Psoas muscle (tissue), 8 donors: ENCODE measurements at regions of chr14 and their contacts with region 1.

Region 1: DNA sequence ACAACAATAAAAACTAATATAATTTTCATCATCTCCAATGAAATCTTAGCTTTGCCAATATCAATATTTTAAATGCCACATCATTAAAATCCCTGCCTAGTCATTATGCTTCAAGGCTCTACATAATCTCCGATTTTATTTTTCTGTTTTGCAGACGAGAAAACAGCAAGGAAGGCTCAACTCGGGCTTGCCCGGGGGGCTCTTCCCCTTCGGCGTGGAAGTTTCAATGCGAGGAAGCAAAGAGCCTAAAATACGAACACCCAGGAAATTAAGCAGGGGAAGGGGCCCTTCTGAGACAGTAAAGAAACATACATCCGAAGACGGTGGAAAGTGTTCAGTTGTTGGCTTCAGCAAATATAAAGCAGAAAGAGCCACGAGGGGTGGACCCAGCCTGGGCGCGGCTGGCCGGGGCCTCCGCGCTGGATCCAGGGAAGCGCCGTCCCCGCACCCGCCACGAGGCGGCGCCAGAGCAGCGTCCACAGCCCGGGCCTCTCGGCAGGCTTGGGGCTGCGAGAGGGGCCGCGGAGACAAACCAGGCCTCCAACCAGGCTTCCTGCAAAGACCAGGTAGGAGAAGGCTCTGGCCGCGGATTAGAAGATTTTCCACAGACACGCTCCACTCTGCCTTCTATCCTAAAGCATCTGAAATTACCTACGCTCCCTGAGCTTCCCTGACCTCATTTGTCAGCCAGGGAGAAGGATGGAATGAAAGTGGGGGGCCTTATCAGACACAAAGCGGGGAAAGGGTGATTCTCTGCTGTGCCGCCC is 77.2 kb downstream of the SERPINA3 start:
- DNase-seq: peak; percentile 68 to 79
- ATAC-seq: peak; percentile 76 to 92 (median 89)
- H3K4me3 ChIP-seq: no peak overlapping the region
- H3K27ac ChIP-seq: no peak overlapping the region
- H3K4me1 ChIP-seq: no peaks in the 10 kb centered on the region
- H3K27me3 ChIP-seq: no peaks in the 10 kb centered on the region
- CTCF ChIP-seq: peak; percentile 85

Region 2: DNA sequence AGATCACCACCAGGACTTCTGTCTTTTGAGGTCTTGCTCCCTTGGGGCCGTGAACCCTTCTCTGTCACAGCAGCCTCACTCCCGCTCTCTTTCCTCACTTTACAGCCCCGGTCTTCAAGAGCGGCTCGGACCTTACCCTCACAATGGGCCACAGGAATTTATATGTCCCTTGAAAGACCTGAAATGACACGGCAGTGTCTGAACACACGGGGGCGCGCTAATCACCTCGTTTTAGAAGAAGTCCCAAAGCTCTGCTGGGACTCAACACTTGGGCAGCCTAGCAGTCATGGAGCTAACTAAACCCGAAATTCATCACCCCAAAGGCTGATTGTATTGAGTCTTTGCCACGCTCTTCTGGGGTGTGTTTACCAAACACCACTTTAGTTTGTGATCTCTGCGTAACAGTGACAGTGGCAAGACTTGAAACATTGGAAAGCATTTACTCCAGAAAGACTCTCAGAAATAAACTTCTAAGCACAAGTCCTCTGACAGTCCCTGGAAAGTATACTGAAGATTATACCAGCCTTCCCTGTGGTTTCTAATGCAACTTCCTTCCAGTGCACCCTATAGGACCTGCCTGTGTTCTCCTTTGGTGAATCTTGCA is 265.8 kb before region 1 on chr14:
- intact Hi-C with region 1: loop called in 1 of 2 experiments (anchors 10 kb)
- DNase-seq: peak; percentile 57 to 76
- ATAC-seq: peak in 2 of 4 donors; percentile 25 to 50
- H3K4me3 ChIP-seq: no peak overlapping the region
- H3K27ac ChIP-seq: no peak overlapping the region
- H3K4me1 ChIP-seq: no peaks in the 10 kb centered on the region
- H3K27me3 ChIP-seq: peaks cover 0 to 7% (median 2%) of the 10 kb centered on the region in 3 donors
- CTCF ChIP-seq: peak; percentile 28

Region 3: GRCh38 chr14:94773071-94773648 is 83.8 kb after region 1 on chr14:
- intact Hi-C with region 1: no loop called
- DNase-seq: no peak
- ATAC-seq: no peak
- H3K4me3 ChIP-seq: no peak overlapping the region
- H3K27ac ChIP-seq: no peak overlapping the region
- H3K4me1 ChIP-seq: peaks cover 6% of the 10 kb centered on the region
- H3K27me3 ChIP-seq: peaks cover 2 to 94% (median 37%) of the 10 kb centered on the region in 3 donors
- CTCF ChIP-seq: no peak

Region 4: DNA sequence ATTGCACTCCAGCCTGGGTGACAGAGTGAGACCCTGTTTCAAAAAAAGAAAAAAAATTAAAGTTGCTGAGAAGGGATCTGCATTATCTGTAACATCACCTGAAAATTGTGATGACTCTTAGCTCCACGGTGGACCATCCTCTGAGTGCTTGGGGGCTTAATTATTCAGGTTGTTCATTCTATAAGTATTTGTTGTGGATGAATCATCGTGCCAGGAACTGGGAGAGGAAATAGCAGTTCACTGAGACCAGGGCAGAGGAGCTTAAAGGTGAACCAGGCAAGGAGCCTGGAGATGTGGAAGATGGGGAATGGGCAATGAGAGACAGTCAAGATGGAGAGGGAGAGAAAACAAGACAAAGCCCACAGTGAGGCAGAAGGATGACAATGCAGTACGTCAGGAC is 106.0 kb after region 1 on chr14:
- intact Hi-C with region 1: no loop called
- DNase-seq: no peak
- ATAC-seq: no peak
- H3K4me3 ChIP-seq: no peak overlapping the region
- H3K27ac ChIP-seq: no peak overlapping the region
- H3K4me1 ChIP-seq: no peaks in the 10 kb centered on the region
- H3K27me3 ChIP-seq: peaks cover 0 to 3% (median 2%) of the 10 kb centered on the region in 3 donors
- CTCF ChIP-seq: no peak

Region 5: GRCh38 chr14:94960285-94960996 is 271.0 kb after region 1 on chr14:
- intact Hi-C with region 1: no loop called
- DNase-seq: no peak
- ATAC-seq: no peak
- H3K4me3 ChIP-seq: no peak overlapping the region
- H3K27ac ChIP-seq: no peak overlapping the region
- H3K4me1 ChIP-seq: no peaks in the 10 kb centered on the region
- H3K27me3 ChIP-seq: peaks cover 0 to 4% (median 2%) of the 10 kb centered on the region in 3 donors
- CTCF ChIP-seq: no peak

Region 6: GRCh38 chr14:95098984-95099599 is 409.7 kb after region 1 on chr14:
- intact Hi-C with region 1: loop called in 1 of 2 experiments (anchors 5 kb)
- DNase-seq: peak; percentile 72 to 77
- ATAC-seq: peak; percentile 72 to 84 (median 80)
- H3K4me3 ChIP-seq: no peak overlapping the region
- H3K27ac ChIP-seq: no peak overlapping the region
- H3K4me1 ChIP-seq: peaks cover 13% of the 10 kb centered on the region
- H3K27me3 ChIP-seq: no peaks in the 10 kb centered on the region
- CTCF ChIP-seq: peak; percentile 71

Region 7: DNA sequence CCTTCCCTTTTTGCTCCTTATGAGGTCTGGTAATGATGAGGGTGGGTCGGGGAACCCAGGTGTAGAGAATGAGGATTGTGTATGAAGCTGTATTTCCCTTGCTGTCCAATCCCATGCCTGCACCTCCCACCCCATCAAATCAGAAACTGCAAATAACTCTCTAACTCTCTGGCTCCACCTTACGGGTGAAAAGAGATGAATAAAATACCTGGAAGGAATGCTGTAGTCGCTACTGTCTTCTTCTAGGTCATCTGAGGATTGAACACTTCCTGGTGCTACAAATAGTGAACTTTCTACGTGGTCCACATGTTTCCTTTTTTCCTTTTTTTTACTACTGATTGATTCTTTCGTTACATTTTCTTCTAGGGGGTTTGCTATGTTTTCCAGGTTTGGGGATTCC is 506.9 kb after region 1 on chr14:
- intact Hi-C with region 1: loop called in 1 of 2 experiments (anchors 5 kb)
- DNase-seq: no peak
- ATAC-seq: no peak
- H3K4me3 ChIP-seq: no peak overlapping the region
- H3K27ac ChIP-seq: no peak overlapping the region
- H3K4me1 ChIP-seq: no peaks in the 10 kb centered on the region
- H3K27me3 ChIP-seq: no peaks in the 10 kb centered on the region
- CTCF ChIP-seq: peak; percentile 42

Region 8: DNA sequence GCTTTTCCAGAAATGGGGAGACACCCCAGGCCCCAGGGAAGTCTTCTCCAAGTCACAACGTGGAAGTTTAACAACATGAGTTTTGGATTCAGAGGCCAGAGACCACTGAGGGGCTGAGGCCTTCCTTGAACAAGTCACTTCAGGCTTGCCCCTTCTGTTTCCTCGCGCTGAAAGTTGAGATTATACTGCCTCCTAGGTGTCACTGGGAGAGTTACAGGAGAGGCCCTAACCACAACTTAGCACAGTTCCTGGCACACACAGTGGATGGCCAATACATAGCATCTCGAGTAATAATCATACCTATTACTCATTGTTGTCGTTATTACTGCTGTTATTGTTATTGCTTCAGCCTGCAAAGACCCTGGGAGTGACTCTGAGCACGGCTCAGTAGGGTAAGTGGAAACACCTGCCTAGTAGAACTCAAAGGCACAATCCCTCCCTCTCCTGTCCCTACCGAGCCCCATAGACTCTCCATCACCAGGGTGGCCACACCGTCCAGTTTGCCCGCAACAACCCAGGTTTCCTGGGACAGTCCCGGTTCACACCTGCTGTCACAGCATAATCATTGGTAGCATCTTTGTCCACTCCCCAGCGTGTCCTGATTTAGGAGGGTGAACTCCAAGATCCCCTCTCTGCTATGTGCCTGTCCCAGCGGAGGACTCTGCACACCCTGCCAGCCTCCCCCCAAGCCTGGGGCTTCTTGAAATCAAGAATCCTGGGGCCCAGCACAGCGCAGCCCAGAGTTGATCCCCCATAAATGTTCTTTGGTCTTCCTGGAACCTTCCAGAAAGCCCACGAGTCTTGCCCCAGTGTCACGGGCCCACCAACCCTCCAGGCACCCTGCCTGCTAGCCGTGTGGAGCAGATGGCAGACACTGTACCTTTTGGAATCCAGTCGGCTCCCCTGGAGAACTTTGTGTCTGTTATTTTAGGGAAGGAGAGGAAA is 742.1 kb after region 1 on chr14:
- intact Hi-C with region 1: loop called (anchors 5 to 10 kb)
- DNase-seq: no peak
- ATAC-seq: peak in 3 of 4 donors; percentile 41 to 67 (median 49)
- H3K4me3 ChIP-seq: no peak overlapping the region
- H3K27ac ChIP-seq: no peak overlapping the region
- H3K4me1 ChIP-seq: peaks cover 3% of the 10 kb centered on the region
- H3K27me3 ChIP-seq: no peaks in the 10 kb centered on the region
- CTCF ChIP-seq: peak; percentile 34